Transverse colon (tissue), 4 donors: ENCODE measurements at regions of chr12 and their contacts with region 1.

Region 1: GRCh38 chr12:116236148-116236731 is 41.3 kb downstream of the MED13L start:
- DNase-seq: peak; percentile 37
- H3K4me3 ChIP-seq: no peak overlapping the region
- H3K27ac ChIP-seq: peak overlapping the region in 1 of 4 donors; percentile 4
- H3K4me1 ChIP-seq: peaks cover 5 to 28% (median 19%) of the 10 kb centered on the region in 4 donors
- H3K27me3 ChIP-seq: no peaks in the 10 kb centered on the region
- CTCF ChIP-seq: peak; percentile 59 to 69 (median 63)
- EP300 ChIP-seq: no peak
- POLR2A ChIP-seq: no peak

Region 2: DNA sequence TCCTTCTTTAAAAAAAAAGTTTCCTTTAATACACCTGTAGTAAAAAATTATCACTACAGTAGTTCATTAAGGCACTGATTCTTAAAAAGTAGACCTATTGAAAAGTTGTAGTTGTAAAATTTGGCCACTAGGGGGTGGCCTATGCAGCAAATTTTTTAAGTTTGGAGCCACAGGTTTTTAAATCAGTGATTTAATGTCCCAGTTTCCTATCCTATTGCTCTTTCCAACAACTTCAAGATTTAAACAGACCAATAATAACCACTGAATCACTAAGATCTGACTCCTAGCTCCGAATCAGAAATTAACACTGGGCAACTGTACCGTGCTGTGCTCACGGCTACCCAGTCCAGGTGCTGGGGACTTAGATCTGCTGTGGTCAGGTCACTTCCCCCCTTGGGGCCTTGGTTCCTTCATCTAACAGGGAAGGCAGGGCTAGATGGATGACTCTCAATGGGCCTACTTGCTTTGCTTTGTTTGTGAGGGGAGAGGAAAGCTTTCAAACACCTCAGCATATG is 238.1 kb before region 1 on chr12:
- in situ Hi-C with region 1: loop called (anchors 10 to 25 kb)
- intact Hi-C with region 1: no loop called
- DNase-seq: peak; percentile 14
- H3K4me3 ChIP-seq: no peak overlapping the region
- H3K27ac ChIP-seq: peak overlapping the region in 2 of 4 donors; percentile 12 to 26
- H3K4me1 ChIP-seq: peaks cover 0 to 17% (median 11%) of the 10 kb centered on the region in 4 donors
- H3K27me3 ChIP-seq: no peaks in the 10 kb centered on the region
- CTCF ChIP-seq: peak; percentile 77 to 85 (median 82)
- EP300 ChIP-seq: no peak
- POLR2A ChIP-seq: no peak

Region 3: DNA sequence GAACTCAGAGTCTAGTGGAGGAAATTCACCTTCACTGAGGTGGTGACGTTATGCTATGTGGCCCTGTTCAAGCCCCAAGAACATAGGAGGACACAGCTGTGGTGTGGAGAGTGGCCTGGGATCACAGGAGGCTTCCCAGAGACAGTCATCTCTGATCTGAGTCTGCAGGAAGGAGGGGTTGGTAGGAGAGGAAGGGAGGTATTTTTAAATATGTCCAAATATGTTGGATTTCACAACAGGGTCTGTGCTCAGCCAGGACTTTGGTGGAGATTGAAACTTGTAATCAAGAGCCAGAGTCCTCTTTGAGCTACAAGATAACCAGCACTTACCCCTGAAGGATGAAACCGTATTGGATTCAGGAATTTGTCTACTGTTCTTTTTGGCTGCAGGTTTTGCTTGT is 67.7 kb after region 1 on chr12:
- in situ Hi-C with region 1: no loop called
- intact Hi-C with region 1: no loop called
- DNase-seq: no peak
- H3K4me3 ChIP-seq: no peak overlapping the region
- H3K27ac ChIP-seq: no peak overlapping the region
- H3K4me1 ChIP-seq: peaks cover 0 to 16% (median 7%) of the 10 kb centered on the region in 4 donors
- H3K27me3 ChIP-seq: no peaks in the 10 kb centered on the region
- CTCF ChIP-seq: no peak
- EP300 ChIP-seq: no peak
- POLR2A ChIP-seq: no peak